Endothelial cell of umbilical vein (primary cell): ENCODE measurements at regions of chr7 and their contacts with region 1.

Region 1: GRCh38 chr7:23273141-23273599 is 26.0 kb upstream of the MALSU1 start:
- DNase-seq: peak; percentile 92
- H3K4me3 ChIP-seq: peak overlapping the region in 1 of 3 experiments; percentile 7
- H3K27ac ChIP-seq: peak overlapping the region; percentile 42
- H3K4me1 ChIP-seq: peaks cover 9% of the 10 kb centered on the region
- H3K27me3 ChIP-seq: no peaks in the 10 kb centered on the region
- CTCF ChIP-seq: peak; percentile 89 to 95
- POLR2A ChIP-seq: no peak

Region 2: DNA sequence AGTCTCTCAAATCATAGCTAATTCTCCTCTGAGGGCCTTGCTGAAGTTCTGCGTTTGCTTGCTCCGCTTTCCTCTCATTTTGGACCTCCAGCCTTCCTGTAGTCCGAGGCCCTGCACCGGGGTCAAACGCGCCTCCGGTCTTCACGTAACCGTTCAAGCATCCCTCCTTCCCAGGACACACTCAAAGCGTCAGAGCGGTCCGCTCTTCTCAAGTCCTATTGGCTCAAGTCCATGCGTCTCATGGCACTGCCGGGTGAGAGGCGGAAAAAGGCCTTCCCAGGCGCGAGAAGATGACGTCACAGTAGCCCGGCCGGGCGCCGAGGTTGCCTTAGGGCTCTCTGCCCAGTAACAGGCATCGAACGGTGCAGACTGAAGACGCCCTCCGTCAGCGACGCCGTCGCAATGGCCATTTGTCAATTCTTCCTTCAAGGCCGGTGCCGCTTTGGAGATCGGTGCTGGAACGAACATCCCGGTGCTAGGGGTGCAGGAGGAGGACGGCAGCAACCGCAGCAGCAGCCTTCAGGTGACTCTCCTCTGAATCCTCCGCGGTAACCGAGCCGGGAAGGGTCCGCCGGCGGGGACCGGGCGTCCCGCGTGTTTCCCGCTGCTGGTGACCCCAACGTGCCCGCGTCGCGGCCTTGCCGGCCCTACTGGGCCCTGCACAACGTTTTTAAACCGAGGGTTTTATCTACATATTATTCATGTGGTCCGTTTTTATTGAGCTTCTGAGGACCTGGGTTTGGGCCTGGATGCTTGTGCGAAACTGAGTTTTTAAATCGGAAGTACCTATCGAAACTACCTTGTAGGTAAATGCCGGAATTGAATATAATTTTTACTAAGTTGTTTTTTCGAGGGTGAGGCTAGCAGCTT is 91.3 kb before region 1 on chr7 and contains the start of gene NUP42:
- CTCF ChIA-PET with region 1: interaction called, 17 read pairs
- POLR2A ChIA-PET with region 1: no interaction called
- dilution Hi-C with region 1: no loop called
- intact Hi-C with region 1: no loop called
- DNase-seq: peak; percentile 99
- H3K4me3 ChIP-seq: peak within 1 kb of the TSS; percentile 77 to 94 (median 90)
- H3K27ac ChIP-seq: peak within 1 kb of the TSS; percentile 54
- H3K4me1 ChIP-seq: peaks cover 14% of the 10 kb centered on the region
- H3K27me3 ChIP-seq: no peaks in the 10 kb centered on the region
- CTCF ChIP-seq: no peak
- POLR2A ChIP-seq: peak; percentile 57
- total RNA-seq, gene NUP42: 38.6 and 40.0 TPM in 2 replicates

Region 3: GRCh38 chr7:23357190-23358093 is 84.3 kb after region 1 on chr7:
- CTCF ChIA-PET with region 1: interaction called, 14 read pairs
- POLR2A ChIA-PET with region 1: no interaction called
- dilution Hi-C with region 1: no loop called
- intact Hi-C with region 1: loop called (anchors 2 kb)
- DNase-seq: peak; percentile 81
- H3K4me3 ChIP-seq: peak overlapping the region in 1 of 3 experiments; percentile 44
- H3K27ac ChIP-seq: peak overlapping the region; percentile 53
- H3K4me1 ChIP-seq: peaks cover 44% of the 10 kb centered on the region
- H3K27me3 ChIP-seq: no peaks in the 10 kb centered on the region
- CTCF ChIP-seq: peak; percentile 7
- POLR2A ChIP-seq: peak; percentile 18

Region 4: DNA sequence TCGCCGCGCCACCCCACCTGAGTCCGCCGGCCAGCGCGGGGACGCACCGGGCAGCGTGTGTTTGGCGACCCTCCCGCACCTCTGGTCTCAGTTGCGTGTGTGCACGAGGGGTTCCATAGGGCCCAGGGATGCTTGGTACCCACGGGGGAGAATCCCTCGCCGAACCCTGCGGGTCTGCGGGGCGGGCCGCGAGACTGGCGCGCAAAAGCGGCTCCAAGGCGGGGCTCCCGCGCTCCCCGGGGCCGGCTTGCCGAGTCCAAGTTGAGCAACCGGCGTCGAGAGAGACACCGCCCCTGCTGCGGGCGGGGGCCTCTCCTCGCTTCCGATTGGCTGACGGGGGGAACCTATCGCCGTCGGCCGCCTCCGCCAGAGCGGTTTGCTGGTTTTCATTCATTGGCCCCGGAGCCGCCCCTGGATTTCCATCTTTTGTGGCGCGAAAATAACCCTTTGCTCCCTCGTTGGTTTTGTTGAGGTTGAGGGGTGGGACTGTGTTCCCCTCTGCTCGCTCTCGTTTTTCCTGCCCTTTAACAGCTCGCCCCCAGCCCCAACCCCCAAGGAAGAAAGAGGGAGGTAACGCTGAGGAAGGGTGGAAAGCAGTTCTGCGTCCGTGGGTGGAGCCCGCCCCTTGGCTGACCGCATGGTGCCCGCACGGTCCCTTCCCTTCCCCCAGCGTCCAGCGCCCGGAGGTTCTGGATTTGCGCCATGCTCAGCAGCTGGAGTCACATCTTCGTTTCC is 201.1 kb after region 1 on chr7:
- CTCF ChIA-PET with region 1: interaction called, 17 read pairs
- POLR2A ChIA-PET with region 1: no interaction called
- dilution Hi-C with region 1: no loop called
- intact Hi-C with region 1: no loop called
- DNase-seq: peak; percentile 95
- H3K4me3 ChIP-seq: peak overlapping the region; percentile 11 to 74 (median 50)
- H3K27ac ChIP-seq: peak overlapping the region; percentile 29
- H3K4me1 ChIP-seq: peaks cover 19% of the 10 kb centered on the region
- H3K27me3 ChIP-seq: peaks cover 27 to 46% of the 10 kb centered on the region in 2 experiments
- CTCF ChIP-seq: no peak
- POLR2A ChIP-seq: peak; percentile 68

Region 5: GRCh38 chr7:23520582-23520981 is 247.4 kb after region 1 on chr7:
- CTCF ChIA-PET with region 1: interaction called, 22 read pairs
- POLR2A ChIA-PET with region 1: no interaction called
- dilution Hi-C with region 1: loop called (anchors 25 kb)
- intact Hi-C with region 1: no loop called
- DNase-seq: no peak
- H3K4me3 ChIP-seq: no peak overlapping the region
- H3K27ac ChIP-seq: no peak overlapping the region
- H3K4me1 ChIP-seq: no peaks in the 10 kb centered on the region
- H3K27me3 ChIP-seq: no peaks in the 10 kb centered on the region
- CTCF ChIP-seq: peak in 1 of 2 donors; percentile 7
- POLR2A ChIP-seq: no peak

Region 6: DNA sequence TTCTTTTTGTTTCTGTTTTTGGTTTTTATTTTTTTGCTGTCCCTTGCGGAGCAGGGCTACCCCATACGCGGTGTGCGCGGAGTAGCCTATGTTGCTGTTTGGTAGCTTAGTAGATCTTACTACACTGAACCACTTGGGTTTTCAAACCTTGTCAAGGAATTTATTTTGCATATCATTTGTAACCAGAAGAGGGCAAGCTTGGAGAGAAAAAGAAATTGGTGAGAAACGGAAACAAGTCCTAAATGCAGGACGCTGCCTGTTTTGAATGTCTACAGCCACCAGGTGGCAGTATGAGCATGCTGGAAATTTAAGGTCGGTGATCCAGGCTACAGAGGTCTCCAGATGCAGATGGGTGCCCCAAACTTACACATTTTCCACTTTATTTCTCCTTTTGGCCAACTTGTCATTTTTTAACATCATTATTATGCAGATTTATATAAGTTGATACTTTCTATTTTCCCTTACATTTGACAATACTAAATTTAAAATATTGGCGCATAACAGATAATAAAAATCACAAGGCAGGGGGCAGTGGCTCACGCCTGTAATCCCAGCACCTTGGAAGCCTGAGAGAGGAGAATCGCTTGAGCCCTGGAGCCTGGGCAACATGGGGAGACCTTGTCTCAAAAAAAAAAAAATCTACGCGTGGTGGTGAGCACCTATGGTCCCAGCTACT is 273.9 kb after region 1 on chr7:
- CTCF ChIA-PET with region 1: interaction called, 88 read pairs
- POLR2A ChIA-PET with region 1: interaction called, 5 read pairs
- dilution Hi-C with region 1: no loop called
- intact Hi-C with region 1: loop called (anchors 1 kb)
- DNase-seq: peak; percentile 91
- H3K4me3 ChIP-seq: no peak overlapping the region
- H3K27ac ChIP-seq: no peak overlapping the region
- H3K4me1 ChIP-seq: no peaks in the 10 kb centered on the region
- H3K27me3 ChIP-seq: peaks cover 0 to 2% of the 10 kb centered on the region in 2 experiments
- CTCF ChIP-seq: peak; percentile 82 to 97
- POLR2A ChIP-seq: no peak